CD4-positive, alpha-beta memory T cell (primary cell): ENCODE measurements at regions of chr9 and their contacts with region 1.

Region 1: DNA sequence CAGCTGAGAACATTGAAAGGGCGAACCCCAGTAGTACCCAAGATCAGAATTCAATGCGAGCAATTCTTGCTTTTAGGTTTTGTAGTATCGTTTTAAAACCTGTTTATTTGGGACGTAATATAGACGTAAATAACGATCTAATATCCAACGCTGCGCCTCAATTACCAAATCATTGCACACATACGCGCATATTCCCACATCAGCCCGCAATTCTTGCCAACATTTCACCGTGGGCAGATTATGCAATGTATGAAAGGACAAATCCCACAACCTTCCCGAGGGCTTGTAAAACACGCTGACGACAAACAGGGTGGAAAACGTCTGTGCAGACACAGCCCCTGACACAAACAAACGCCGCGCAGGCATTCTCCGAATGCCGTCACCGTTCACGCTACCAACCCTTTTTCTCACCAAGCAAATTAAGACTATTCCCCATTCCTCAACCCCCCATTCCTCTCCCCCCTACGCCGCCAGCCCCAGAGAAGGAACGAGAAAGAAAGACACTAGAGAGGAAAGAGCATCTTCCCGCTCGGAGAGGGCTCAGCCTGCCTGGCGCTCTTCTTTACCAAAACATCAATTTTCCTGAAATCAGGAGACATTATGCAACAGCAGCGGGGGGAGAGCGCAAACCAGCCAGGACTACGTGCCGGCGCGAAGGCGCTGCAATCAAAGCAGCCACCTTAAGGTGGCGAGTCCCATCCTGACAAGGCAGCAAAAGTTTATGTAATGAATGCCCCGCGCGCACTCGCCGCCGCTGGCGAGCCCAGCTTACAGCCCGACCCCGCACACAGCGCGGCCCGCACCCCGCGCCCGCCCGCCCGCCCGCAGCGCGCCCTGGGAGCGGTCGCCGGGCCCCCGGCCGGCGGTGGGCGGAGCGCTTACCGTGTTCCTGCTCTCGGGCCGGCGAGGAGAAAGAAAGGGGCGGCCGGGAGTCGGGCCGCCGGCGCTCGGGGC is 597 bp downstream of the NFIL3 start:
- DNase-seq: peak; percentile 61 to 72 (median 67)
- H3K4me3 ChIP-seq: peak overlapping the region; percentile 51 to 88
- H3K4me3 Mint-ChIP-seq: peak overlapping the region; percentile 86 to 98 (median 92)
- H3K27ac ChIP-seq: no peak overlapping the region
- H3K27ac Mint-ChIP-seq: peak overlapping the region; percentile 23 to 95 (median 84)
- H3K4me1 ChIP-seq: peaks cover 36% of the 10 kb centered on the region
- H3K4me1 Mint-ChIP-seq: peaks cover 35 to 46% (median 41%) of the 10 kb centered on the region in 4 donors
- H3K27me3 ChIP-seq: peaks cover 18% of the 10 kb centered on the region
- H3K27me3 Mint-ChIP-seq: peaks cover 28 to 29% of the 10 kb centered on the region in 2 donors

Region 2: GRCh38 chr9:90914868-90915483 is 508.1 kb before region 1 on chr9:
- CTCF ChIA-PET with region 1: interaction called, 155 read pairs
- POLR2A ChIA-PET with region 1: interaction called, 3 read pairs
- intact Hi-C with region 1: loop called (anchors 1 kb)
- DNase-seq: peak; percentile 59 to 66 (median 61)
- H3K4me3 ChIP-seq: no peak overlapping the region
- H3K4me3 Mint-ChIP-seq: no peak overlapping the region
- H3K27ac ChIP-seq: no peak overlapping the region
- H3K27ac Mint-ChIP-seq: no peak overlapping the region
- H3K4me1 ChIP-seq: no peaks in the 10 kb centered on the region
- H3K4me1 Mint-ChIP-seq: no peaks in the 10 kb centered on the region
- H3K27me3 ChIP-seq: no peaks in the 10 kb centered on the region
- H3K27me3 Mint-ChIP-seq: no peaks in the 10 kb centered on the region

Region 3: DNA sequence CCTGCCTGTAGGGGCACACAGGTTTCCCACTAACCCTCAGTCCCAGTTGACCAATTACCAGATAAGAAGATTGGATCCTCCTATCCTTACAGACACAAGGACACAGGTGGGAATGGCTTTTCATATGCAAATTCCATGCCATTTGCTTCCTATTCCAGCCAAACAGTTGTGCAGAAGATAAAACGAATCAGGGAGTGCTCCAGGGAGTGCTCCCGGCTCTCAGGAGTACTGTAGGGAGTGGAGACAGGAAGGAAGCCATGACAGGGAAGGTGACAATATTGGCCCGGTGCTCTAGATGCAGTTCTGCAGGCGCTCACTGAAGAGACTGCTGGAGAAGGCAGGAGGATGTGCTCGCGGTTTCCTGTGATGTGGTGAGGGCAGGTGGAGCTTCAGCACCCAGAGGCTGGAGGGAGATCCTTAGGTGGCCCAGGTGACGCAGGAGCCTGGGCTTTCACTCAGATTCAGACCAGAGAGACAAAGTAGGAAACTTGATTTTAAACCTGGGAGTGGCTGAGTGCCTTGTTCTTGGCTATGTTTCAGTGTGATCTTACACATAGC is 321.3 kb before region 1 on chr9:
- CTCF ChIA-PET with region 1: no interaction called
- POLR2A ChIA-PET with region 1: no interaction called
- intact Hi-C with region 1: loop called (anchors 5 kb)
- DNase-seq: peak; percentile 86 to 95 (median 89)
- H3K4me3 ChIP-seq: no peak overlapping the region
- H3K4me3 Mint-ChIP-seq: peak overlapping the region in 7 of 8 donors; percentile 2 to 81 (median 49)
- H3K27ac ChIP-seq: no peak overlapping the region
- H3K27ac Mint-ChIP-seq: peak overlapping the region; percentile 58 to 96 (median 84)
- H3K4me1 ChIP-seq: peaks cover 39% of the 10 kb centered on the region
- H3K4me1 Mint-ChIP-seq: peaks cover 25 to 40% (median 32%) of the 10 kb centered on the region in 4 donors
- H3K27me3 ChIP-seq: no peaks in the 10 kb centered on the region
- H3K27me3 Mint-ChIP-seq: peaks cover 3 to 5% of the 10 kb centered on the region in 2 donors

Region 4: GRCh38 chr9:91223000-91223399 is 200.0 kb before region 1 on chr9:
- CTCF ChIA-PET with region 1: no interaction called
- POLR2A ChIA-PET with region 1: no interaction called
- intact Hi-C with region 1: no loop called
- DNase-seq: no peak
- H3K4me3 ChIP-seq: no peak overlapping the region
- H3K4me3 Mint-ChIP-seq: no peak overlapping the region
- H3K27ac ChIP-seq: no peak overlapping the region
- H3K27ac Mint-ChIP-seq: no peak overlapping the region
- H3K4me1 ChIP-seq: no peaks in the 10 kb centered on the region
- H3K4me1 Mint-ChIP-seq: no peaks in the 10 kb centered on the region
- H3K27me3 ChIP-seq: no peaks in the 10 kb centered on the region
- H3K27me3 Mint-ChIP-seq: no peaks in the 10 kb centered on the region

Region 5: GRCh38 chr9:91361291-91362050 is 61.6 kb before region 1 on chr9 and contains the start of gene AUH:
- CTCF ChIA-PET with region 1: interaction called, 4 read pairs
- POLR2A ChIA-PET with region 1: interaction called, 16 read pairs
- intact Hi-C with region 1: loop called (anchors 1 kb)
- DNase-seq: peak; percentile 80 to 87 (median 85)
- H3K4me3 ChIP-seq: peak within 1 kb of the TSS; percentile 38 to 84
- H3K4me3 Mint-ChIP-seq: peak within 1 kb of the TSS; percentile 94 to 99 (median 98)
- H3K27ac ChIP-seq: peak within 1 kb of the TSS; percentile 77
- H3K27ac Mint-ChIP-seq: peak within 1 kb of the TSS; percentile 82 to 98 (median 94)
- H3K4me1 ChIP-seq: peaks cover 39% of the 10 kb centered on the region
- H3K4me1 Mint-ChIP-seq: peaks cover 33 to 56% (median 40%) of the 10 kb centered on the region in 4 donors
- H3K27me3 ChIP-seq: no peaks in the 10 kb centered on the region
- H3K27me3 Mint-ChIP-seq: no peaks in the 10 kb centered on the region
- total RNA-seq, gene AUH: 23.6 to 25.2 TPM

Region 6: GRCh38 chr9:91451519-91452270 is 28.7 kb after region 1 on chr9:
- CTCF ChIA-PET with region 1: no interaction called
- POLR2A ChIA-PET with region 1: no interaction called
- intact Hi-C with region 1: no loop called
- DNase-seq: no peak
- H3K4me3 ChIP-seq: no peak overlapping the region
- H3K4me3 Mint-ChIP-seq: no peak overlapping the region
- H3K27ac ChIP-seq: no peak overlapping the region
- H3K27ac Mint-ChIP-seq: no peak overlapping the region
- H3K4me1 ChIP-seq: no peaks in the 10 kb centered on the region
- H3K4me1 Mint-ChIP-seq: no peaks in the 10 kb centered on the region
- H3K27me3 ChIP-seq: no peaks in the 10 kb centered on the region
- H3K27me3 Mint-ChIP-seq: peaks cover 4 to 18% of the 10 kb centered on the region in 2 donors

Region 7: DNA sequence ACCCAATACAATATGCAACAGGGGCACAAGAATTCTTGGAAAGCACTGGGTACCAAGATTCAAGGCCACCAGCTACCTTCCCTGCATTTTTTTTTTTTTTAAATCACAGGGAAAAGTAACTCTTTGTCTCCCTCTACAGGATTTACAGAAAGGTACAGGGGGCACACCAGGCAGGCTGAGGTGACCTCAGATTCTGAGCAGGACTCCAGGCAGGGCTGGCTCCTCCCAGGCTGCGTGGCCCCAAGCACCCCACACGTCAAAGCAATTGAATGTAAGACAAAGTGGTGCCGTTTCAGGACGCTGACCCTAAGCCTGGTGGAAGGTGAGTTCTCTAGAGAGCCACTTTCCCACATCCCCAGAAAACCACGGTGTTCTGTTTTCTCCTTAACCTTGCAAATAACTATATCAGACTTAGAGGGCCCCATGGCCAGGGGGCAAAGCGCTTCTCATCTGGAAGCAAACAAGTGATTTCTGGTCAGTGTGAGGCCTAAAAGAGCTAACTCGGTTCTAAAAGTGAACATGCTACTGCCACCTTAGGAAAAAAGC is 304.4 kb after region 1 on chr9:
- CTCF ChIA-PET with region 1: no interaction called
- POLR2A ChIA-PET with region 1: no interaction called
- intact Hi-C with region 1: loop called (anchors 5 kb)
- DNase-seq: peak in 4 of 5 donors; percentile 17 to 30 (median 26)
- H3K4me3 ChIP-seq: no peak overlapping the region
- H3K4me3 Mint-ChIP-seq: no peak overlapping the region
- H3K27ac ChIP-seq: no peak overlapping the region
- H3K27ac Mint-ChIP-seq: no peak overlapping the region
- H3K4me1 ChIP-seq: no peaks in the 10 kb centered on the region
- H3K4me1 Mint-ChIP-seq: no peaks in the 10 kb centered on the region
- H3K27me3 ChIP-seq: no peaks in the 10 kb centered on the region
- H3K27me3 Mint-ChIP-seq: peaks cover 0 to 5% of the 10 kb centered on the region in 2 donors

Region 8: DNA sequence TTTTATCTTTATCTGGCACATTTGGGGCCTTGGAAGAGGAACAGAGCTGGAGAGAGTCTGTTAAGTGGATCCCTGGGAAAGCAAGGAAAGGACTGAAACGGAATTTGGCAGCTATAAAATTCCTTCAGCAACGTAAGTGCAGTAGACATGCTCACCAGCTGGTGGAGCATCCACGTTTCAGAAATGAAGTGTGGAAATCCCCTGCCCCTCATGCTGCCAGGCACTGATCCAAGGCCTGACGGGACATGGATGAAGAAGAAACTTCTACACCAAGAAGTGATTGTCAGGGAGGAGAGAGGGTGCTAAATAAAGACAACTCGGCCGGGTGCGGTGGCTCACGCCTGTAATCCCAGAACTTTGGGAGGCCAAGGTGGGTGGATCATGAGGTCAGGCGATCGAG is 317.7 kb after region 1 on chr9:
- CTCF ChIA-PET with region 1: no interaction called
- POLR2A ChIA-PET with region 1: no interaction called
- intact Hi-C with region 1: no loop called
- DNase-seq: no peak
- H3K4me3 ChIP-seq: no peak overlapping the region
- H3K4me3 Mint-ChIP-seq: no peak overlapping the region
- H3K27ac ChIP-seq: no peak overlapping the region
- H3K27ac Mint-ChIP-seq: no peak overlapping the region
- H3K4me1 ChIP-seq: no peaks in the 10 kb centered on the region
- H3K4me1 Mint-ChIP-seq: no peaks in the 10 kb centered on the region
- H3K27me3 ChIP-seq: no peaks in the 10 kb centered on the region
- H3K27me3 Mint-ChIP-seq: peaks cover 6 to 24% of the 10 kb centered on the region in 2 donors